OCI-LY7 (cell line): ENCODE measurements at regions of chr11 and their contacts with region 1.

Region 1: GRCh38 chr11:57456960-57457642 is 3.2 kb upstream of the RTN4RL2 start:
- DNase-seq: peak; percentile 74
- H3K4me3 ChIP-seq: no peak overlapping the region
- H3K27ac ChIP-seq: no peak overlapping the region
- H3K4me1 ChIP-seq: peaks cover 27% of the 10 kb centered on the region
- CTCF ChIP-seq: peak; percentile 92

Region 2: DNA sequence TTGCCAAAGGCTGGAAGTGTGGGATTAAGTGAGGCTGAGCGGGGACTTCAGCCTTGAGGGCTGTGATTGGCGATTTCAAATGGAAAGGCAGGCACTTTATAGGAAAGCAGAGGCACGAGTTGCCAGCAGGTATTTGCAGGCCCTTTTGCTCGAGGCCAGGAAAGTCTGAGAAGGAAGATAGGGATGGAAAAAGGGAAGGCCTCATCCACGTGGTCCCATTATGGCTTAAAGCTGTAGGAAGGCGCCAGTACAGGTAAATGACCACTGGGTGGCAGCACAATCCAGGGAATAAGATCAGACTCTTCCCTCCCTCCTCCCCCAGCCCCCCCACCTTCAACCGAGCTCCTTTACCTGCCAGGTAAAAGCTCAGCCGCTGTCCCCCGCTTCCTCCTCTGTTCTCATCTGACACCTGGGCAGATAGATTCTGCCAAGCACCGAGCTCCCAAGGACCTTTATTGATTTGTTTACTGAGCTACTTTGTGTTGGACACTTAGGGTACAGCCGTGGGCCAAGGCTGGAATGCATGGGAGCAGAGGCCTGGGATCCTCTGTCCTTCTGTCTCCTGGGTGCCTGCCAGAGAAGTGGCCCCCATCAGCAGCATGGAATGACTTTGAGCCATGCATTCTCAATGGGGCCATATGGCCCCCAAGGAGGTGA is 111.4 kb before region 1 on chr11:
- CTCF ChIA-PET with region 1: interaction called, 3 read pairs
- POLR2A ChIA-PET with region 1: no interaction called
- intact Hi-C with region 1: loop called (anchors 5 kb)
- DNase-seq: peak; percentile 77
- H3K4me3 ChIP-seq: no peak overlapping the region
- H3K27ac ChIP-seq: no peak overlapping the region
- H3K4me1 ChIP-seq: peaks cover 4% of the 10 kb centered on the region
- CTCF ChIP-seq: peak; percentile 84

Region 3: DNA sequence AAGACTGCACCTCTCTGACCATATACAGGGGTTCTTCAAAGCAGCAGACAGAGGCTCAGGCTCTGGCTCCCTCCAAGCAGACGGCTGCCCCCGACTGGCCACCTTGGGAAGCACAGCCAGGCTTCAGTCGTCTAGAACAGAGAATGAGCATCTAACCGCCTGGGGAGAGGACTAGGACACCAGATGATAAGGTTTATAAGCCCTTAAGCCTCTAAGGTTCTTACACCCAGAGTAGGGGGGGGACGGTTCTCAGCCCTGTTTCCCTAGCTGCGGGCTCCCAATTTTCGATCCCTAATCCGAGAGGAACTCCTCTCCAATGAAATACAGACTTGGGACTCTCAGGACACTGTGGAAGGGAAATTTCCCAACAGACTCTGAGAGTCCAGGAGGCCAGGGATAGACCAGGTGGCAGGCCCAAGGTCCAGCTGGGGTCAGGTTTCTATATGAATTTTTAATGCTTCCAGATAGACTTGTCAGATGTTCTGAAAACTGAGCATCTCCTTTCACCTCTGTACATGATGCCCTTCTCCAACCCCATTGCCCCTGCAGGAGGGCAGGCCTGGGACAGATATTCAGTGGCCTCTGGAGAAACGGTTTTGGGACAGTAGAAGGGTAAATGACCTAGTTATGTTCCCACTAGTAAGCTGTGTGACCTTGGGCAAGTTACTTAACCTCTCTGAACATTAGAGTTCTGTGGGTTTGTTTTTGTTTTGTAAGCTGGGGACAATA is 23.5 kb after region 1 on chr11:
- CTCF ChIA-PET with region 1: interaction called, 14 read pairs
- POLR2A ChIA-PET with region 1: no interaction called
- intact Hi-C with region 1: loop called (anchors 2 kb)
- DNase-seq: peak; percentile 74
- H3K4me3 ChIP-seq: no peak overlapping the region
- H3K27ac ChIP-seq: no peak overlapping the region
- H3K4me1 ChIP-seq: peaks cover 73% of the 10 kb centered on the region
- CTCF ChIP-seq: peak; percentile 86

Region 4: GRCh38 chr11:57536947-57537619 is 80.0 kb after region 1 on chr11 and contains the start of gene SMTNL1:
- CTCF ChIA-PET with region 1: no interaction called
- POLR2A ChIA-PET with region 1: no interaction called
- intact Hi-C with region 1: no loop called
- DNase-seq: no peak
- H3K4me3 ChIP-seq: no peak within 1 kb of the TSS
- H3K27ac ChIP-seq: no peak within 1 kb of the TSS
- H3K4me1 ChIP-seq: no peaks in the 10 kb centered on the region
- CTCF ChIP-seq: no peak
- total RNA-seq, gene SMTNL1: not detected in 2 replicates

Region 5: GRCh38 chr11:57567515-57568329 is 110.6 kb after region 1 on chr11 and contains the start of gene UBE2L6:
- CTCF ChIA-PET with region 1: interaction called, 19 read pairs
- POLR2A ChIA-PET with region 1: no interaction called
- intact Hi-C with region 1: loop called (anchors 5 kb)
- DNase-seq: peak; percentile 84
- H3K4me3 ChIP-seq: peak within 1 kb of the TSS; percentile 81
- H3K27ac ChIP-seq: peak within 1 kb of the TSS; percentile 79
- H3K4me1 ChIP-seq: peaks cover 18% of the 10 kb centered on the region
- CTCF ChIP-seq: peak; percentile 95; the same call in 1 of the 2 replicates
- total RNA-seq, gene UBE2L6: 64.7 and 68.9 TPM in 2 replicates

Region 6: GRCh38 chr11:57667736-57668435 is 210.8 kb after region 1 on chr11 and contains the start of gene ZDHHC5:
- CTCF ChIA-PET with region 1: no interaction called
- POLR2A ChIA-PET with region 1: no interaction called
- intact Hi-C with region 1: no loop called
- DNase-seq: peak; percentile 99
- H3K4me3 ChIP-seq: peak within 1 kb of the TSS; percentile 94
- H3K27ac ChIP-seq: peak within 1 kb of the TSS; percentile 88
- H3K4me1 ChIP-seq: peaks cover 23% of the 10 kb centered on the region
- CTCF ChIP-seq: peak; percentile 34
- total RNA-seq, gene ZDHHC5: 23.4 and 27.5 TPM in 2 replicates

Region 7: DNA sequence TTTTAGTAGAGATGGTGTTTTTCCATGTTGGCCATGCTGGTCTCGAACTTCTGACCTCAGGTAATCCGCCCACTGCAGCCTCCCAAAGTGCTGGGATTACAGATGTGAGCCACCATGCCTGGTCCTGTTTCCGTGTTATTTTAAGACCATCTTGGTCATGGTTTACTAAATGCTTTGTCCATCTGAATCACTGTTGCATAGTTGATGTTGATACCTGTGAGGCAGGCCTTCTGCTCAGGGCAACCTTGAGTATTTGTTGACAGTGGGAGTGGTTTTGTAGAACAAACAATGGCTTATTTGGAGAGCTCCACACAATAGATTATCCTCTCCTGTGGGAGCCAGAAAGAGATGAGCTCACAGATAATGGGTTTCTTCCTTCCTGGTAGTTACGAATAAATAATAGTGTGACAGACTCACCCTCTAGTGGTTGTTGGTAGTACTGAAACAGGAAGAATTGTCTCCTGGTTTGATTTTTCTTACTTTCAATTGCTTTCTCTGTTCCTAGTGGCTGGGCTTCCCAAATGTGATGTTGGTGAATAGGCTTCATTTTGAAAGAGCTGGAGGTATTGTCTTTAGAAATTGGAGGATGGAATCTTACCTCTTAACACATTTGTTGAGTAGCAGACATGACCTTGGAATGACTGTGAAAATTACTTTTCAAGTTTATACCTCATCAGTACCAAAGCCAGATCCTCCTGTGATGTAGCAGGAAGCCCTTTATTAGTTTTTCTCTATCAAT is 343.5 kb after region 1 on chr11:
- CTCF ChIA-PET with region 1: no interaction called
- POLR2A ChIA-PET with region 1: no interaction called
- intact Hi-C with region 1: loop called (anchors 2 kb)
- DNase-seq: peak; percentile 74
- H3K4me3 ChIP-seq: no peak overlapping the region
- H3K27ac ChIP-seq: no peak overlapping the region
- H3K4me1 ChIP-seq: peaks cover 12% of the 10 kb centered on the region
- CTCF ChIP-seq: peak; percentile 94

Region 8: GRCh38 chr11:58513747-58514367 is 1056.8 kb after region 1 on chr11:
- CTCF ChIA-PET with region 1: no interaction called
- POLR2A ChIA-PET with region 1: no interaction called
- intact Hi-C with region 1: loop called (anchors 10 kb)
- DNase-seq: peak; percentile 41
- H3K4me3 ChIP-seq: no peak overlapping the region
- H3K27ac ChIP-seq: no peak overlapping the region
- H3K4me1 ChIP-seq: no peaks in the 10 kb centered on the region
- CTCF ChIP-seq: peak; percentile 74